T-cell (primary cell): ENCODE measurements at regions of chr13 and their contacts with region 1.

Region 1: DNA sequence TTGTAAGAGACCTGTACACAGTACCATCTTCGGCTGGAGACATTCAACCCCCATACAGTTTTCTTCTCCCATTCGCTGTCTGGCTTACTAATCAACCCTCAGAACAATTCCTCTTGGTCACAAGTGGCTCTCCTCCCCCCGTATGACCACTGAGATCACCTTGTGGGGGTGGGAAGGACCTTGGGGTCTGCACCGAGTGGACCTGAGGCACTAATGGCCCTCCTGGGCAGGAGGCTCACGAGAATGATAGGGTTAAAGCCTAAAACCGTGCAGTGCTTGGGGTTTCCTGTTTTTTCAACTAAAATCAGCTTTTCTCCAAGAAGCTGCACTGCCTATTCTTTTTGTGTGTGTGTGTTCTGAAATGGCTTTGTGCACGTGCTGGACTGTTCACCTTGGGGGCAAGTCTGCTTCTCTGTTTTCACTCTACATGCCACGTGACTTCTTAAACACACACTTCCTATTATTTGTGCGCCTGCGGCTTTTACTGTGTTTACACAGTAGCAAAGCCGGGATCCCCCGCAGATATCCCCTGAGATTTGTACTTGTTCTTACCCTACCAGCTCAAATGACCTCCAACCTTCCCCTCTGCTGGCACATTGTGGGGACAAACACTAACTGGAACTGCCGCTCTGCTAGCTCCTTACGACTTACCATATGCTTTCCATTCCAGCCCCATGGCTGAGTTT is 12.3 kb downstream of the RBM26 start:
- DNase-seq: peak; percentile 12 to 73 (median 42)
- ATAC-seq: peak; percentile 79 to 84 (median 81)
- H3K4me3 ChIP-seq: peak overlapping the region; percentile 23 to 66
- H3K4me3 Mint-ChIP-seq: peak overlapping the region; percentile 75 to 80 (median 78)
- H3K27ac ChIP-seq: peak overlapping the region; percentile 55
- H3K27ac Mint-ChIP-seq: peak overlapping the region; percentile 88 to 92
- H3K4me1 ChIP-seq: peaks cover 25 to 54% of the 10 kb centered on the region in 2 experiments
- H3K4me1 Mint-ChIP-seq: peaks cover 65 to 78% (median 67%) of the 10 kb centered on the region in 3 donors
- H3K27me3 ChIP-seq: no peaks in the 10 kb centered on the region
- H3K27me3 Mint-ChIP-seq: no peaks in the 10 kb centered on the region

Region 2: DNA sequence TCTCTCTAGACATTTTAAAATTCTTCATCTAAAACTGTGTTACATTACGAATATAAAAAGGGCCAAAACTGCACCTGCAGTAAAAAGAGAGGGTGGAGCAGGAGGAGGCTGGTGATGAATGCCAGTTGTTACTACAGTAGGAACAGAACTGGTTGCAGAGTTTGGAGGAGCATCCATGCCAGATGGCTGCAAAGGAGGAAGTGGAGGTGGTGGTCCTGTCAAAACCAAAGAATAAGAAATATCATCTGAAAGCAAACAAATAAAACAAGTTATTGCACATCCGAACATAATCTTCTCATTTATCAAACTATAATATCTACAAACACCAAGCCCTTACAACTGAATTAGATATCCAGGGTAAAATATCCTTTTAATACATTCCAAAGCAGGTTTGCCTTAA is 27.7 kb before region 1 on chr13:
- CTCF ChIA-PET with region 1: no interaction called
- POLR2A ChIA-PET with region 1: no interaction called
- DNase-seq: no peak
- ATAC-seq: no peak
- H3K4me3 ChIP-seq: no peak overlapping the region
- H3K4me3 Mint-ChIP-seq: no peak overlapping the region
- H3K27ac ChIP-seq: no peak overlapping the region
- H3K27ac Mint-ChIP-seq: no peak overlapping the region
- H3K4me1 ChIP-seq: no peaks in the 10 kb centered on the region
- H3K4me1 Mint-ChIP-seq: peaks cover 11 to 21% (median 13%) of the 10 kb centered on the region in 3 donors
- H3K27me3 ChIP-seq: no peaks in the 10 kb centered on the region
- H3K27me3 Mint-ChIP-seq: no peaks in the 10 kb centered on the region

Region 3: GRCh38 chr13:79382545-79383289 is 11.0 kb before region 1 on chr13:
- CTCF ChIA-PET with region 1: interaction called, 7 to 24 read pairs
- POLR2A ChIA-PET with region 1: no interaction called
- DNase-seq: no peak
- ATAC-seq: peak; percentile 54 to 69 (median 62)
- H3K4me3 ChIP-seq: no peak overlapping the region
- H3K4me3 Mint-ChIP-seq: peak overlapping the region; percentile 37 to 67 (median 49)
- H3K27ac ChIP-seq: no peak overlapping the region
- H3K27ac Mint-ChIP-seq: peak overlapping the region; percentile 62 to 82
- H3K4me1 ChIP-seq: peaks cover 6 to 28% of the 10 kb centered on the region in 2 experiments
- H3K4me1 Mint-ChIP-seq: peaks cover 66 to 74% (median 70%) of the 10 kb centered on the region in 3 donors
- H3K27me3 ChIP-seq: no peaks in the 10 kb centered on the region
- H3K27me3 Mint-ChIP-seq: no peaks in the 10 kb centered on the region

Region 4: DNA sequence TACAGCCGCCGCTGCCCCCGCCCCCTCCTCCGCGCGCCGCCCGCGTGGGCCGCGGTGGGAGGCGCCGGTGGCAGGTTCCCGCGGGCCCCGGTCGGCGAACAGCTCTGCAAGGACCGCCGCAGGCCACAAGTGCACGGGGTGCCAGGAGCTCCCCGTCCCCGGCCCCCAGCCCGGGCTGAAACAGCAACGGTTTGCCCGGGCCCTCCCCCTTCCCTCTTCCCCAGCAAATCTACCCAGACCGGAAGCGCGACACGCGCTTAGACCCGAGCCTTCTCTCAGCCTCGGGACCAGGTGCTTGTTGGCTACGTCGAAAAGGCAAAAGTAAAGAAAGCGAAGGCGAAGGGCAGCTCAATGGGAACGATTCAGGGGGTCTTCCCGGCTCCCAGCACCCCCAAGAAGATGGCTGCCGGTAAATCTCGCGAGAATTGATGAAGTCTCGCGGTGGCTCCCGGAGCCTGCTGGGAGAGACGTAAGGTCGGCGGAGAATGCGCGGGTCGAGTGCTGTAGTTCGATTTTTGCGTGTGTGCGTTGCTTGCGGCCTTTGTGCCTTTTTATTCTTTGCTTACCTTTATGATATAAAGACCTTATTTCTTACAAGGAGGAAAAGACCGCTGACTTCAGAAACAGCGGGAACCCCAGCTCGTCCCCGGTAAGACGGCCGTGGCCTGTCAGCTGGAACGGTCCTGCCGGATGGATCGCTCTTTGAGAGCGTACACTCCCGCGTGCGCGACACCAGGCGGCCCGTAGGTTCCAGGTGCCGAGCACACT is 12.3 kb after region 1 on chr13 and contains the start of gene RBM26:
- CTCF ChIA-PET with region 1: interaction called, 5 to 23 read pairs
- POLR2A ChIA-PET with region 1: interaction called in 1 of 2 experiments, 7 read pairs
- DNase-seq: peak; percentile 84 to 98 (median 91)
- ATAC-seq: peak; percentile 89 to 91 (median 90)
- H3K4me3 ChIP-seq: peak within 1 kb of the TSS; percentile 65 to 98
- H3K4me3 Mint-ChIP-seq: peak within 1 kb of the TSS in 1 of 3 donors; percentile 94
- H3K27ac ChIP-seq: peak within 1 kb of the TSS; percentile 90
- H3K27ac Mint-ChIP-seq: peak within 1 kb of the TSS; percentile 95 to 99
- H3K4me1 ChIP-seq: peaks cover 18 to 45% of the 10 kb centered on the region in 2 experiments
- H3K4me1 Mint-ChIP-seq: peaks cover 17 to 33% (median 24%) of the 10 kb centered on the region in 3 donors
- H3K27me3 ChIP-seq: no peaks in the 10 kb centered on the region
- H3K27me3 Mint-ChIP-seq: no peaks in the 10 kb centered on the region
- total RNA-seq, gene RBM26: 76.7 to 97.8 (median 77.9) TPM

Region 5: GRCh38 chr13:79451500-79451962 is 57.8 kb after region 1 on chr13:
- CTCF ChIA-PET with region 1: no interaction called
- POLR2A ChIA-PET with region 1: no interaction called
- DNase-seq: peak; percentile 47 to 88 (median 74)
- ATAC-seq: peak; percentile 100
- H3K4me3 ChIP-seq: no peak overlapping the region
- H3K4me3 Mint-ChIP-seq: peak overlapping the region; percentile 22 to 56 (median 46)
- H3K27ac ChIP-seq: peak overlapping the region; percentile 46
- H3K27ac Mint-ChIP-seq: peak overlapping the region; percentile 79 to 91
- H3K4me1 ChIP-seq: peaks cover 15 to 18% of the 10 kb centered on the region in 2 experiments
- H3K4me1 Mint-ChIP-seq: peaks cover 44 to 52% (median 46%) of the 10 kb centered on the region in 3 donors
- H3K27me3 ChIP-seq: no peaks in the 10 kb centered on the region
- H3K27me3 Mint-ChIP-seq: no peaks in the 10 kb centered on the region

Region 6: GRCh38 chr13:79571147-79571546 is 177.4 kb after region 1 on chr13:
- CTCF ChIA-PET with region 1: no interaction called
- POLR2A ChIA-PET with region 1: no interaction called
- DNase-seq: no peak
- ATAC-seq: no peak
- H3K4me3 ChIP-seq: no peak overlapping the region
- H3K4me3 Mint-ChIP-seq: no peak overlapping the region
- H3K27ac ChIP-seq: no peak overlapping the region
- H3K27ac Mint-ChIP-seq: no peak overlapping the region
- H3K4me1 ChIP-seq: no peaks in the 10 kb centered on the region
- H3K4me1 Mint-ChIP-seq: no peaks in the 10 kb centered on the region
- H3K27me3 ChIP-seq: no peaks in the 10 kb centered on the region
- H3K27me3 Mint-ChIP-seq: peaks cover 0 to 5% of the 10 kb centered on the region in 2 donors